ENCODE measurements at regions of chr3 and their contacts with region 1.

Region 1: DNA sequence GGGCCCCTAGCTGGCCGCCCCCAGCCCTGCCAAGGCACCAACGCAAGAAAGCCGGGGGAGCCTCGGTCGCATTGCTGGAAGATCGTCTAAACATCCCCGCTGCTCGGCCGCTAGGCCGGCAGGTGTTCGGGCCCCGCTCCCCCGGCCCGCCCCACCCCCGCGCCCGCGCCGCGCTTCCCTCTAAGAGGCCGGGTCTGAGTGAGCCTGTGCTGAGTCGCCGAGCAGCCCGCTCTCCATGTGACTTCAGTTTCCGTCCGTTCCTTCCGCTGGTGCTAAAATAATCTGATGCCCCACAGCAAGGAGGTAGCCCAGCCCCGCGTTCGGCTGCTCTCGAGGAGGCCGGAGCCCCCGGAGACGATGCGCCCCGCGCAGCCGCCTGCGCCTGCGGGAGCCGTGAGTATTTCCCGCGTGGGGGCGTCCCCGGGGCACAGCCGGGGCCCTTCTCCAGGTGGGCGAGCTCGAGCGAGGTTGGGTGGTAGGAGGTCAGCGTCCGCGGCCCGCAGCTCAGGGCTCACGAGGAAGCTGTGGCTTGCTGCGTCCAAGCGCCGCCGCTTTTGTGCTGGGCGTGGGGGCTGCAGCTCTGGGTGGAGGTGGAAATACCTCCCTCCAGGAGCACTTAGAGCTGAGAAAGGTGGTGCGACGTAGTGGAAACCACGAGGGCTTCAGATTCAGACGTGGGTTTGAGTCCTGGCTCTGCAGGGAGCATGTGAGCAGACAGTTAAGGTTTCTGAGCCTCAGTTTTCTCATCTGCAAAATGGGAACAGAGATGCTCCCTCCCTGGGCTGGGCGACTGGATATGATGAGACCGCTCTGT is at the start of gene NRROS:
- DNase-seq: peak; percentile 87 to 97 (median 95)
- H3K4me3 ChIP-seq: peak within 1 kb of the TSS; percentile 76 to 96 (median 91)
- H3K27ac ChIP-seq: peak within 1 kb of the TSS; percentile 85 to 89
- H3K4me1 ChIP-seq: peaks cover 29 to 91% (median 81%) of the 10 kb centered on the region in 4 experiments
- H3K27me3 ChIP-seq: no peaks in the 10 kb centered on the region

Region 2: GRCh38 chr3:196650740-196651311 is 11.1 kb after region 1 on chr3:
- CTCF ChIA-PET with region 1: interaction called, 16 read pairs
- POLR2A ChIA-PET with region 1: interaction called, 3 read pairs
- DNase-seq: peak in 2 of 3 donors; percentile 54 to 62
- H3K4me3 ChIP-seq: no peak overlapping the region
- H3K27ac ChIP-seq: peak overlapping the region in 1 of 2 experiments; percentile 52
- H3K4me1 ChIP-seq: peaks cover 5 to 57% (median 47%) of the 10 kb centered on the region in 4 experiments
- H3K27me3 ChIP-seq: no peaks in the 10 kb centered on the region

Measured in common myeloid progenitor, CD34-positive (primary cell).